ENCODE measurements at regions of chr19 and their contacts with region 1.

Region 1: DNA sequence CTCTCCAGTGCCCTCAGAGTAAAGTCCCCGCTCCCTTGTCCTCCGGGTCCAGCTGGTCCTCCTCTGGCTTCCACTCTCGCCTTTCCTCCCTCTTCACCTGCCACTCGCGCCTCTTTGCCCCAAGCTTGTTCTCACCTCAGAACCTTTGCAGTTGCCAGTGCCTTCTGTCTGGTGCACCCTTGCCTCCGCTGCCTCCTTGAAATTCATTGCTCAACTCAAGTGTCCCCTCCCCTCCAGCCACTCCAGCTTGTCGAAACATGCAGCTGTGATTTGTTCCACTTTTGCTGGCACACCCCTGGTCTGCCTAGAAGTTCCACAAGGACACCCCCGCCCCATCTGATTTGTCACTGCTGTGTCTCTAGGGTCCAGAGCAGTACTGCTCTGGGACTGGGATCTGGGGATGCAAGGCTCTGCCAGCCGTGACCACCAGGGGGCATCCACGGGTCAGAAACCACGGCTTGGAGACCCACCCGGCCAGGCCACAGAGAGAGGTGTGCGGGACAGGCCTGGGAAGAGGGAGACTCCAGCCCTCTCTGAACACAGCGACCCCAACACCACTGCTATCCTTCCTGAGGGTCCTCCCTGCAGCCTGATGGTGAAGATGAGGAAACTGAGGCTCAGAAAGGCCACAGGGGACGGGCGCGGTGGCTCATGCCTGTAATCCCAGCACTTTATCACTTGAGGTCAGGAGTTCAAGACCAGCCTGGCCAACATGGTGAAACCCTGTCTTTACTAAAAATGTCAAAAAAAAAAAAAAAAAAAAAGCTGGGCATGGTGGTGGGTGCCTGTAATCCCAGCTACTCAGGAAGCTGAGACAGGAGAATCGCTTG is 49.9 kb downstream of the AP1M1 start:
- DNase-seq: peak; percentile 87

Region 2: DNA sequence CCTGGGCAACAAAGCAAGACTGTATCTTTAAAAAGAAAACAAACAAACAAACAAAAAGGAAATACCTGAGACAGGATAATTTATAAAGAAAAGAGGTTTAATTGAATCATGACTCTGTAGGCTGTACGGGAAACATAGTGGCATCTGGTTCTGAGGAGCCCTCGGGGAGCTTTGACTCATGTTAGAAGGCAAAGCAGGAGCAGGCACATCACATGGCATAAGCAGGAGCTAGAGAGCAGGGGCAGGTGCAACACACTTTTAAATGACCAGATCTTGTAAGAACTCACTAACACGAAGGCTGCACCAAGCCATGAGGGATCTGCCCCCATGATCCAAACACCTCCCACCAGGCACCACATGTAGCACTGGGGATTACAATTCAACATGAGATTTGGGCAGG is 532.9 kb before region 1 on chr19:
- in situ Hi-C with region 1: no loop called
- DNase-seq: no peak

Region 3: GRCh38 chr19:16382775-16383543 is 135.4 kb after region 1 on chr19:
- in situ Hi-C with region 1: loop called (anchors 5 kb)
- DNase-seq: peak; percentile 83